ENCODE measurements at regions of chr6 and their contacts with region 1.

Region 1: GRCh38 chr6:130697995-130698535 is 129.1 kb upstream of the SMLR1 start:
- DNase-seq: peak; percentile 47 to 54 (median 53)
- H3K4me3 ChIP-seq: no peak overlapping the region
- H3K4me3 Mint-ChIP-seq: peak overlapping the region in 7 of 8 donors; percentile 36 to 65 (median 48)
- H3K27ac ChIP-seq: no peak overlapping the region
- H3K27ac Mint-ChIP-seq: no peak overlapping the region
- H3K4me1 ChIP-seq: peaks cover 27% of the 10 kb centered on the region
- H3K4me1 Mint-ChIP-seq: peaks cover 26 to 46% (median 30%) of the 10 kb centered on the region in 4 donors
- H3K27me3 ChIP-seq: no peaks in the 10 kb centered on the region
- H3K27me3 Mint-ChIP-seq: no peaks in the 10 kb centered on the region

Region 2: DNA sequence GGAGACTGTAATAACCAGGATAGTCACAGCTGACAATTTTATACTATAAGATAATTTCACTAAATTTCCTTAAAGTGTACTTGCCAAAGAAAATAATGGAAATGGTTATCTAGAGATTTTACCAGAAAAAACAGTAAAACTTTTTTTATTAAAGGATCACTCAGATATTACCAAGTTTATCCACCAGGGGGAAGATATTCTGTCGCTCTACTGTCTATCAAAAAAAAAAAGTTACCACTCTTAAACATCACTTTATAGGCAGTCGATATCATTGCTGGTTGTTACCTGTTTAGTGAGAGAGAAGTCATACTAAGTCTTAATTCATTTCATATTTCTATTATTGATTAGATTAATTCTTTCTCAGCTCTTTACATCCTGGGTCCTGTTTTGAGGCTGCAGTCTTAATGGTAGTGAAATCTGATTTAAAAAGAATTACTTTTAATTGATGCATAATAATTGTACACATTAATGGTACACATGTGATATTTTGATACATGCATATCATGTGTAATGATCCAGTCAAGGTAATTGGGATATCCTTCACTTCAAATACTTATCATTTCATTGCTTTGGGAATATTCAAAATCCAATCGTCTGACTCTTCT is 660.8 kb before region 1 on chr6:
- CTCF ChIA-PET with region 1: no interaction called
- POLR2A ChIA-PET with region 1: no interaction called
- intact Hi-C with region 1: loop called (anchors 1 kb)
- DNase-seq: peak in 4 of 5 donors; percentile 21 to 38 (median 27)
- H3K4me3 ChIP-seq: no peak overlapping the region
- H3K4me3 Mint-ChIP-seq: no peak overlapping the region
- H3K27ac ChIP-seq: no peak overlapping the region
- H3K27ac Mint-ChIP-seq: no peak overlapping the region
- H3K4me1 ChIP-seq: peaks cover 54% of the 10 kb centered on the region
- H3K4me1 Mint-ChIP-seq: peaks cover 40 to 67% (median 58%) of the 10 kb centered on the region in 4 donors
- H3K27me3 ChIP-seq: no peaks in the 10 kb centered on the region
- H3K27me3 Mint-ChIP-seq: no peaks in the 10 kb centered on the region

Region 3: GRCh38 chr6:130322673-130323268 is 375.3 kb before region 1 on chr6:
- CTCF ChIA-PET with region 1: interaction called, 174 read pairs
- POLR2A ChIA-PET with region 1: no interaction called
- intact Hi-C with region 1: loop called (anchors 1 kb)
- DNase-seq: peak; percentile 51 to 60 (median 55)
- H3K4me3 ChIP-seq: no peak overlapping the region
- H3K4me3 Mint-ChIP-seq: no peak overlapping the region
- H3K27ac ChIP-seq: no peak overlapping the region
- H3K27ac Mint-ChIP-seq: no peak overlapping the region
- H3K4me1 ChIP-seq: peaks cover 5% of the 10 kb centered on the region
- H3K4me1 Mint-ChIP-seq: peaks cover 0 to 6% (median 2%) of the 10 kb centered on the region in 4 donors
- H3K27me3 ChIP-seq: no peaks in the 10 kb centered on the region
- H3K27me3 Mint-ChIP-seq: no peaks in the 10 kb centered on the region

Region 4: GRCh38 chr6:130381459-130382380 is 316.3 kb before region 1 on chr6:
- CTCF ChIA-PET with region 1: interaction called, 29 read pairs
- POLR2A ChIA-PET with region 1: no interaction called
- intact Hi-C with region 1: loop called (anchors 5 kb)
- DNase-seq: peak; percentile 52 to 66 (median 57)
- H3K4me3 ChIP-seq: no peak overlapping the region
- H3K4me3 Mint-ChIP-seq: peak overlapping the region in 7 of 8 donors; percentile 11 to 64 (median 43)
- H3K27ac ChIP-seq: no peak overlapping the region
- H3K27ac Mint-ChIP-seq: peak overlapping the region in 6 of 7 donors; percentile 1 to 65 (median 28)
- H3K4me1 ChIP-seq: peaks cover 21% of the 10 kb centered on the region
- H3K4me1 Mint-ChIP-seq: peaks cover 21 to 34% (median 26%) of the 10 kb centered on the region in 4 donors
- H3K27me3 ChIP-seq: no peaks in the 10 kb centered on the region
- H3K27me3 Mint-ChIP-seq: no peaks in the 10 kb centered on the region

Region 5: DNA sequence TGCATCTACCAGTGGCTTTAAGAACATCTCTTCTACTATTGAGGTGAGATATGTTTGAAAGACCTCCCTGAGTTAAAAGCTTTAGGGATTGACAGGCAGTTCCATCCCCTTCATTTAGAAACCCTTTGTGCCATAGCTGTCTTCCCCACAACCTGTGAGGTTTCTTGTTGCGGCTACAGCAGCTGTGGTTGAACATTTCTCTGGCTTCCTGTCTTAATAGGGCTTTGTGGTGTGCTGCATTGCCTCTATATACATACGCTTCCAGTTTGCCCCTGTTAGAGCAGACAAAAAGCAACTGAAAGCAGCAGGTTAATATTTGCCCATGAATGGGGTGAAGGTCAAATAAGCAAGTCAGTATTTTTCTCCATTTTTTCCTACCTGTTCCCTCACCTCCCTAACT is 122.1 kb before region 1 on chr6:
- CTCF ChIA-PET with region 1: interaction called, 11 read pairs
- POLR2A ChIA-PET with region 1: no interaction called
- intact Hi-C with region 1: no loop called
- DNase-seq: peak; percentile 69 to 79 (median 71)
- H3K4me3 ChIP-seq: peak overlapping the region in 1 of 2 donors; percentile 36
- H3K4me3 Mint-ChIP-seq: peak overlapping the region; percentile 63 to 83 (median 78)
- H3K27ac ChIP-seq: no peak overlapping the region
- H3K27ac Mint-ChIP-seq: peak overlapping the region; percentile 56 to 88 (median 73)
- H3K4me1 ChIP-seq: peaks cover 58% of the 10 kb centered on the region
- H3K4me1 Mint-ChIP-seq: peaks cover 49 to 70% (median 59%) of the 10 kb centered on the region in 4 donors
- H3K27me3 ChIP-seq: no peaks in the 10 kb centered on the region
- H3K27me3 Mint-ChIP-seq: no peaks in the 10 kb centered on the region

Region 6: GRCh38 chr6:130872250-130873095 is 174.4 kb after region 1 on chr6:
- CTCF ChIA-PET with region 1: interaction called, 6 read pairs
- POLR2A ChIA-PET with region 1: no interaction called
- intact Hi-C with region 1: loop called (anchors 2 kb)
- DNase-seq: peak; percentile 43 to 59 (median 58)
- H3K4me3 ChIP-seq: no peak overlapping the region
- H3K4me3 Mint-ChIP-seq: no peak overlapping the region
- H3K27ac ChIP-seq: no peak overlapping the region
- H3K27ac Mint-ChIP-seq: peak overlapping the region in 1 of 7 donors; percentile 76
- H3K4me1 ChIP-seq: no peaks in the 10 kb centered on the region
- H3K4me1 Mint-ChIP-seq: peaks cover 0 to 7% (median 3%) of the 10 kb centered on the region in 4 donors
- H3K27me3 ChIP-seq: no peaks in the 10 kb centered on the region
- H3K27me3 Mint-ChIP-seq: peaks cover 0 to 1% of the 10 kb centered on the region in 2 donors

Region 7: DNA sequence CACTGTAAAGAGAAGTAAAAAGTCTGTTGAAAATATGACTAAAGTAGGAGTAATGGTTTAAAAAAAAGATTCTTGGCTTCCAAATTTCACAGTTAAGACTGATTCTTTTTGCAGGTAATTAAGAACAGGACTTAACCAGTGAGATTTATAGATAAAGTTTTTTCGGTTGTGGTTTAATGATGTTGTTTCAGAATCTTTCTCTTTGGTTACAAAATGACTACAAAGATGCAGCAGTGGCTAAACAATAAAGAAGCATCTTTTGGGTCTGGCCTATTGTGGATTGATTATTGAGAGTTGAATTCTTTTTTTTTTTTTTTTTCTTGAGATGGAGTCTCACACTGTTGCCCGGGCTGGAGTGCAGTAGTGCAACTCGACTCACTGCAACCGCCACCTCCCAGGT is 546.9 kb after region 1 on chr6:
- CTCF ChIA-PET with region 1: no interaction called
- POLR2A ChIA-PET with region 1: no interaction called
- intact Hi-C with region 1: no loop called
- DNase-seq: peak in 4 of 5 donors; percentile 6 to 27 (median 14)
- H3K4me3 ChIP-seq: no peak overlapping the region
- H3K4me3 Mint-ChIP-seq: peak overlapping the region in 7 of 8 donors; percentile 8 to 65 (median 28)
- H3K27ac ChIP-seq: no peak overlapping the region
- H3K27ac Mint-ChIP-seq: peak overlapping the region; percentile 4 to 65 (median 53)
- H3K4me1 ChIP-seq: peaks cover 20% of the 10 kb centered on the region
- H3K4me1 Mint-ChIP-seq: peaks cover 15 to 38% (median 28%) of the 10 kb centered on the region in 4 donors
- H3K27me3 ChIP-seq: no peaks in the 10 kb centered on the region
- H3K27me3 Mint-ChIP-seq: no peaks in the 10 kb centered on the region

Region 8: DNA sequence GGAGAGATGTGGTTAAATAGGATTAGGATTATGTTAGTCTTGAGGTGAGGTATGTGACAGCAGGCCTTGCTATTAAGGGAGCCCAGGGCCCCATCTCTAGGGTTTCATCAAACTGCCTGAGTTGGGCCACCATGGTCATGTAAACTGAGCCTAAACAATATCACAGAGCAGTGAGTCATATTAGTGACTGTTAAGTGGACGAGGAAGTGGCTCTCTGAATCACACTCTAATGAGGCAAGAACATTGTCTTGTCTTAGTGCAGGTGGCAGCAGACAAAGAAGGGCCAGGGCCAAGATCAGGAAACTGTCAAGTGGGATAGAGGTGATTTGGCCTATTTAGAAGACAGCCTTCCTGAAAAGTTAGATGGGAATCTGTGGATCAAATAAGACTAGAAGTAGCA is 962.1 kb after region 1 on chr6:
- CTCF ChIA-PET with region 1: no interaction called
- POLR2A ChIA-PET with region 1: no interaction called
- intact Hi-C with region 1: no loop called
- DNase-seq: no peak
- H3K4me3 ChIP-seq: no peak overlapping the region
- H3K4me3 Mint-ChIP-seq: no peak overlapping the region
- H3K27ac ChIP-seq: no peak overlapping the region
- H3K27ac Mint-ChIP-seq: no peak overlapping the region
- H3K4me1 ChIP-seq: no peaks in the 10 kb centered on the region
- H3K4me1 Mint-ChIP-seq: no peaks in the 10 kb centered on the region
- H3K27me3 ChIP-seq: no peaks in the 10 kb centered on the region
- H3K27me3 Mint-ChIP-seq: no peaks in the 10 kb centered on the region